Colonic mucosa (tissue), 4 donors: ENCODE measurements at regions of chr2 and their contacts with region 1.

Region 1: GRCh38 chr2:70861777-70862625 is 26.4 kb upstream of the CD207 start:
- DNase-seq: peak; percentile 74
- H3K4me3 ChIP-seq: no peak overlapping the region
- H3K27ac ChIP-seq: no peak overlapping the region
- H3K4me1 ChIP-seq: no peaks in the 10 kb centered on the region
- H3K27me3 ChIP-seq: peaks cover 10% of the 10 kb centered on the region
- CTCF ChIP-seq: peak; percentile 97

Region 2: GRCh38 chr2:70420128-70420530 is 441.9 kb before region 1 on chr2:
- intact Hi-C with region 1: no loop called
- DNase-seq: no peak
- H3K4me3 ChIP-seq: no peak overlapping the region
- H3K27ac ChIP-seq: no peak overlapping the region
- H3K4me1 ChIP-seq: no peaks in the 10 kb centered on the region
- H3K27me3 ChIP-seq: no peaks in the 10 kb centered on the region
- CTCF ChIP-seq: no peak

Region 3: DNA sequence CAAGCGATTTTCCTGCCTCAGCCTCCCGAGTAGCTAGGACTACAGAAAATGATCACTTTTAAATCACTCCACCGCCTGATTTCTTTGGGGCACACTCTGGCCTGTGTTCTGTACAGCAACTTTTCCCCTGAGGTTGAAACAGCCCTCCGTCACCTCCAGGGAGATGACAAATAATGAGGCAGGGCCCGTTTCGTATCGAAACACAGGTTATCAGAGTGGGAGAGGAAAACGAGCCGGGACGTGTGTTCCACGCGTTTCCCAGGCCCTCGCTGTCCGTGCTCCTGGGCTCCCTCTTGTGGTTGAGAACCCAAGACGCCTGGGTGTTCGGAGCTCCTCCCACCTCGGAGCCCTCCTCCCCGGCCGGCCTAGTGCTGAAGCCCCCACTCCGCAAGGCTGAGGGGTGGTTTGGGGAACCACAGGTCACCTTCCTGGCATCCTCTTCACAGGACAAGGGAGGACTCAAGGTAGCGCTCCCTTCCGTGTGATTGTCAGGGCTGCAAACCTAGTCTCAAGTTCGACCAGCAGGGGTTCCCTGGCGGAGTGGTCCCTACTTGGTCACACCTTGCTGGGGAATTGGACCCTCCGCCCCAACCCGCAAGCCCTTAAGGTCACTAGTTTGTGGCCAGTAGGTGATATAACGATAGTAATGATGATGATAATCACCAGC is 86.5 kb after region 1 on chr2:
- intact Hi-C with region 1: loop called (anchors 2 kb)
- DNase-seq: peak; percentile 85
- H3K4me3 ChIP-seq: no peak overlapping the region
- H3K27ac ChIP-seq: no peak overlapping the region
- H3K4me1 ChIP-seq: no peaks in the 10 kb centered on the region
- H3K27me3 ChIP-seq: no peaks in the 10 kb centered on the region
- CTCF ChIP-seq: peak; percentile 69